Activated CD4-positive, alpha-beta T cell treated with anti-CD3 and anti-CD28 coated beads, Interleukin-2, amount 10 ng/mL, durations not matched to agents 24 days and 14 days (primary cell): ENCODE measurements at regions of chr6 and their contacts with region 1.

Region 1: DNA sequence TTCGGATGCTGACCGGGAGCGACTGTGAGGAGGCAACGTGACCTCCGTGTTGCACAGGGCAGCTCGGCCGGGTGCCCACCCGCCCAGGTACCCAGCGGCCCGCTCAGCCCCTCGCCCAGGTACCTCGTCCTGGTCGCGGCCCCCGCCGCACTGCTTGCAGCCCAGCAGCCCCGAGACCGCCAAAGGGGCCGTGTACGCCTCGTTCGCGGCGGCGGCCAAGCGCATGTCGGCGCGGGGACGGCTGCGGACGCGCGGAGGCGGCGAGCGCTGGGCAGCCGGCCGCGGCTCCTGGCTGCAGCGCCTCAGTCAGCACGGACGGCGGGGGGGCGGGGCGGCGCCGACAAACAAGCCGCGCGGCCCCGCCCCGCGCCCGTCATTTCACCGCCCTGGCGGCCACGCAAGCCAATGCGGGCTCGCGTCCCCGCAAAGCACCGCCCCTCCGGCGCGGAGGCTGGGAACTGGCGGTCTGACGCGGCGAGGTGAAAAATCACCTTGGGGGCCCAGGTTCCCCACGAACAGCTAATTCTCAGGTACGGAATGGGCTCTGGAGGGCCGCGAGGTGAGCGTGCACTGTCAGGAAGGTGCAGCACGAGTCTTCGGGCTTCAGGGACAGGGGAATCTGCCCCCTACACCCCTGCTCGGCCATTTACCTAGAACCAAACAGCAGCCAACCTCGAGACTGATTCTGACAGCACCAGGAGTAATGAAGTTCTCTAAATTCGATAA is 85.2 kb downstream of the SESN1 start:
- DNase-seq: peak; percentile 98
- H3K4me3 Mint-ChIP-seq: peak overlapping the region; percentile 93
- H3K27ac Mint-ChIP-seq: peak overlapping the region; percentile 92
- H3K4me1 Mint-ChIP-seq: peaks cover 35% of the 10 kb centered on the region
- H3K27me3 Mint-ChIP-seq: peaks cover 2% of the 10 kb centered on the region

Region 2: DNA sequence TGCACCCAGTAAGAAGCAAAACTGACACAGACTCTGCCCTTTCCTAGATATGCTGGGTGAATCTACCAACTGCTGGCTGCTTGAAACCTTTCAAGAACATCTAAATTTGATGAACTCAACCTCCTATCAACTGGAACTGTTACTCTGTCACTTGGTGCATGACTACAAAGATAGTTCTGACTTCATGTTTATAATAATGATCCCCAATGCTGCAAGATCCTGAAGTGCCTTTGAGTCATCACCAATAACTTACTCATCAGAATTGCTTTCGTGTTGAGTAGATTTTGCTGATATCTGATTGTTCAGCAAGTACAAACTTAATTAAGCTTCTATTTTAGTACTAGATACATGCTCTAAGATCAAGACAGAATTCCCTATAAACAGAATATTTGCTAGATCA is 261.3 kb before region 1 on chr6:
- intact Hi-C with region 1: no loop called
- DNase-seq: no peak
- H3K4me3 Mint-ChIP-seq: no peak overlapping the region
- H3K27ac Mint-ChIP-seq: no peak overlapping the region
- H3K4me1 Mint-ChIP-seq: no peaks in the 10 kb centered on the region
- H3K27me3 Mint-ChIP-seq: peaks cover 30% of the 10 kb centered on the region

Region 3: GRCh38 chr6:108874470-108875160 is 134.8 kb before region 1 on chr6:
- intact Hi-C with region 1: loop called (anchors 2 kb)
- DNase-seq: peak; percentile 87
- H3K4me3 Mint-ChIP-seq: peak overlapping the region; percentile 68
- H3K27ac Mint-ChIP-seq: peak overlapping the region; percentile 91
- H3K4me1 Mint-ChIP-seq: peaks cover 67% of the 10 kb centered on the region
- H3K27me3 Mint-ChIP-seq: peaks cover 20% of the 10 kb centered on the region

Region 4: GRCh38 chr6:108904741-108905140 is 104.7 kb before region 1 on chr6:
- intact Hi-C with region 1: no loop called
- DNase-seq: no peak
- H3K4me3 Mint-ChIP-seq: no peak overlapping the region
- H3K27ac Mint-ChIP-seq: no peak overlapping the region
- H3K4me1 Mint-ChIP-seq: peaks cover 26% of the 10 kb centered on the region
- H3K27me3 Mint-ChIP-seq: peaks cover 13% of the 10 kb centered on the region

Region 5: GRCh38 chr6:108921547-108922361 is 87.6 kb before region 1 on chr6:
- intact Hi-C with region 1: loop called (anchors 2 kb)
- DNase-seq: peak; percentile 68
- H3K4me3 Mint-ChIP-seq: no peak overlapping the region
- H3K27ac Mint-ChIP-seq: peak overlapping the region; percentile 18
- H3K4me1 Mint-ChIP-seq: peaks cover 24% of the 10 kb centered on the region
- H3K27me3 Mint-ChIP-seq: peaks cover 40% of the 10 kb centered on the region

Region 6: DNA sequence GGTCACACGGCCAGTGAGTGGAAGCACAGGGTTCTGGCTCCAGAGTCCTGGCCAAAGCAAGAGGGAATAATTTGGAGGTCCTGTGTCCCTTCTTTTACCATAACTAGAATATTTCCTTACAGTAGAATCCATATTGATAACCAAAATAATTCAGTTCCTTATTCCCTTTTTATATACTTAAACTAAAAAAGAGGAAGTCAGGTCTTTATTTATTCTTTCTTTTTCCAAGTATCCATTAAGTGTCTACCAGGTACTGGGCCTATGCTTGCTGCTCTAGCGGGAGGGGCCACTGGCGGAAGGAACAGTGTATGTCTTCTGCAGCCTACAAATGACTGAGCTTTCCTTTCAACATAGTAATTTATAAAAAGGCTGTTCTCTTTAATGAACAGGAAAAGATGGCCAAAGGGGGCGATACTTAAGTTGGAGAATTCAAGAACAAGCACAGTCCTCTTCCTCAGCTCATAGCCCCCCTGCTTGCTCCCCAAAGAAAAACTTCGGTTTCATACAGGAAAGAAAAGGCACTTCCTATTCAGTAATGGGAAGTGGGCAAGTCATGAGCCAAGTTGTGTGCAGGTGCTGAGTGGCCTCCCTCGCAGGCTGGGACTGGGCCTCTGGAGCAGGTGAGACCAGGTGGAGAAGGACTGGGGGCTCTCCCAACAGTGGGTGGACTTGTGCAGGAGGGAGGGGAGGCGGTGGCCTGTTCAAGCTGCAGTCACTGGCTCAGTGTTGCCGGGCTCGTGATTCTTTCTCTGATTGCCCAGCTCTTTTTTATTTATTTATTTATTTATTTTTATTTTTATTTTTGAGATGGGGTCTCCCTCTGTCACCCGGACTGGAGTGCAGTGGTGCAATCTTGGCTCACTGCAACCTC is 50.3 kb before region 1 on chr6:
- intact Hi-C with region 1: loop called (anchors 5 kb)
- DNase-seq: no peak
- H3K4me3 Mint-ChIP-seq: no peak overlapping the region
- H3K27ac Mint-ChIP-seq: no peak overlapping the region
- H3K4me1 Mint-ChIP-seq: peaks cover 22% of the 10 kb centered on the region
- H3K27me3 Mint-ChIP-seq: no peaks in the 10 kb centered on the region

Region 7: GRCh38 chr6:109073344-109074132 is 64.1 kb after region 1 on chr6:
- intact Hi-C with region 1: loop called (anchors 5 kb)
- DNase-seq: peak; percentile 88
- H3K4me3 Mint-ChIP-seq: no peak overlapping the region
- H3K27ac Mint-ChIP-seq: no peak overlapping the region
- H3K4me1 Mint-ChIP-seq: peaks cover 17% of the 10 kb centered on the region
- H3K27me3 Mint-ChIP-seq: peaks cover 10% of the 10 kb centered on the region